Calu3 (cell line): ENCODE measurements at regions of chr2 and their contacts with region 1.

Region 1: GRCh38 chr2:101883863-101884262 is 107.9 kb upstream of the IL1R2 start:
- DNase-seq: peak; percentile 28
- H3K4me3 Mint-ChIP-seq: no peak overlapping the region
- H3K27ac Mint-ChIP-seq: no peak overlapping the region
- H3K4me1 Mint-ChIP-seq: no peaks in the 10 kb centered on the region
- H3K27me3 Mint-ChIP-seq: no peaks in the 10 kb centered on the region
- CTCF ChIP-seq: peak; percentile 44

Region 2: GRCh38 chr2:101486258-101486701 is 397.6 kb before region 1 on chr2:
- CTCF ChIA-PET with region 1: no interaction called
- intact Hi-C with region 1: no loop called
- DNase-seq: no peak
- H3K4me3 Mint-ChIP-seq: no peak overlapping the region
- H3K27ac Mint-ChIP-seq: no peak overlapping the region
- H3K4me1 Mint-ChIP-seq: peaks cover 12% of the 10 kb centered on the region
- H3K27me3 Mint-ChIP-seq: no peaks in the 10 kb centered on the region
- CTCF ChIP-seq: no peak

Region 3: DNA sequence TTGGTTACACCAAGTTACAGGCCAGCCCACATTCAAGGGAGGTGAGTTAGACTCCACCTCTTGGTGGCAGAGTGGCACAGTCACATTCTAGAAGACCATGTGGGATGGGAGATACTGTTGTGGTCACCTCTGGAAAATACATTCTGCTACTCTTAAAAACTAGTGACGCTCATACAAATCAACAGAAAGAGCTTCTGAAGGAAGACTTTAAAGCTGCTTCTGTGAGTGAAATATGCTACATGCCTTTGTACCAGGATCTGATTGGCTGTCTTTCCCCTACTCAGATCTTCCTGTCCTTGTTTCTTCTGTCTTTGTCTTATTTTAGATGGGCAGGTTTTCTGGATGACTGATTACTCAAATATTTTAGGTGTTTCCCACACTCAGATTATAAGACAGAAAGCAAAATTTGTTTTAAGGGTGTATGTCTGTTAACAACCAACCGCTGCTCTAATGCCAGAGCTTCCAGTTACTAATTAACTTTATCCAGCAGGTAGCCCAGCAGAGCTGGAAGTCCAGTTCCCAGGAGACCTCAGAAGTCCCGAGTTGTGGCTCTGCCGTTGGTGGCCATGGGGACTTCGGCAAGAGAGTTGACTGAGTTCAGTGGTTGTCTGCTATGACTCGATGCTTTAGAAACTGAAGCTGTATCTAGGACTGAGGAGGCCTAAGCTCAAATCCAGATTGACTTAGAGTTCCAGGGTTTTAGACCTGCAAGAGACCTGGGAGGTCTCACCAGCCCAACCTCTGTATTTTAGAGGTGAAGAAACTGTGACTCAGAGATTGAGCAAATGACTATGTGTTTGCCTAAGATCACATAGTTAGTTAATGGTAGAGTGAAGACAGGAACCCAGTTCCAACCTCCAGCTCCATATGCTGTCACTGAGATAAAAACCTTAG is 115.3 kb after region 1 on chr2:
- CTCF ChIA-PET with region 1: interaction called, 3 read pairs
- intact Hi-C with region 1: loop called (anchors 10 kb)
- DNase-seq: peak; percentile 19
- H3K4me3 Mint-ChIP-seq: no peak overlapping the region
- H3K27ac Mint-ChIP-seq: no peak overlapping the region
- H3K4me1 Mint-ChIP-seq: peaks cover 8% of the 10 kb centered on the region
- H3K27me3 Mint-ChIP-seq: peaks cover 11% of the 10 kb centered on the region
- CTCF ChIP-seq: no peak

Region 4: DNA sequence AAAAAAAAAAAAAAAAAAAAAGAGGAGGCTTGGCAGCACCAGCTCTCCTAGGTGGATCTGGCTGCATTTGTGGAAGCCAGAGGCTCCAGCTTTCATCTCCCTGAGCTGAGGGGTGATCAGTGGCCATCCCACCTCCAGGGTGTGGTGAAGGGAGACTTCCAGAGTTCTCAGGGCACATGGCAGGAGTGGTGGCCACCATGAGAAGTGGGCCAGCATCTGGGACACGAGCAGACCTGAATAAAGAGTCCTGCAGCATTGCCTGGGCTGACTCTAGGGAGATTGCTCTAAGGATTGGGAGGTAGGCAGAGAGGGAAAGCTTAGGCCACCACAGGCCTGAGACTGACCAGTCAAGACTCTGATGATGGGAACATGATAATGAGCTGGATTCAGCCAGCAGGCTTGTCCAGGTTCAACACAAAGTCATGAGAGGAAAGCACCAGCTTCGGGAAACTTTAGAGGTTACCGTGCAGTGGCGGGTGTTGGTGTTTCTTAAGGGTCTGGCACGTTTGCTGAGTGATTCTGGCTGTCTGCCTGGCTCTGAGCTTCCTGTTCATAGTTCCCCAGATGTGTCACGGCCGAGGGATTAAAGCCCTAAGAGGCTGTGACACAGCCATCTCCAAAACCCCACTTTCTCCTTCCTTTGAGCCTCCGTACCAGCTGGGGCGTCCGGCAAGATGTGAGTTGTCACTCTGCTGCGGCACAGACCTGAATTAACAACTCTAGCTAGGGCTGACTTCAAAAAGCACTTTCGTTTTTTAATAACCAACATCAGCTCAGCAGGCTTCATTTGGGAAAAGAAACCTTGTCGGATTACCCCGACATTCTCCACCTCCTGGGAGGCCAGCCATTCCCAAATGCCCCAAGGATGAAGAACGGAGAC is 220.4 kb after region 1 on chr2:
- CTCF ChIA-PET with region 1: no interaction called
- intact Hi-C with region 1: no loop called
- DNase-seq: peak; percentile 22
- H3K4me3 Mint-ChIP-seq: peak overlapping the region; percentile 20
- H3K27ac Mint-ChIP-seq: peak overlapping the region; percentile 62
- H3K4me1 Mint-ChIP-seq: peaks cover 68% of the 10 kb centered on the region
- H3K27me3 Mint-ChIP-seq: no peaks in the 10 kb centered on the region
- CTCF ChIP-seq: no peak